CD14-positive monocyte (primary cell): ENCODE measurements at regions of chr9 and their contacts with region 1.

Region 1: DNA sequence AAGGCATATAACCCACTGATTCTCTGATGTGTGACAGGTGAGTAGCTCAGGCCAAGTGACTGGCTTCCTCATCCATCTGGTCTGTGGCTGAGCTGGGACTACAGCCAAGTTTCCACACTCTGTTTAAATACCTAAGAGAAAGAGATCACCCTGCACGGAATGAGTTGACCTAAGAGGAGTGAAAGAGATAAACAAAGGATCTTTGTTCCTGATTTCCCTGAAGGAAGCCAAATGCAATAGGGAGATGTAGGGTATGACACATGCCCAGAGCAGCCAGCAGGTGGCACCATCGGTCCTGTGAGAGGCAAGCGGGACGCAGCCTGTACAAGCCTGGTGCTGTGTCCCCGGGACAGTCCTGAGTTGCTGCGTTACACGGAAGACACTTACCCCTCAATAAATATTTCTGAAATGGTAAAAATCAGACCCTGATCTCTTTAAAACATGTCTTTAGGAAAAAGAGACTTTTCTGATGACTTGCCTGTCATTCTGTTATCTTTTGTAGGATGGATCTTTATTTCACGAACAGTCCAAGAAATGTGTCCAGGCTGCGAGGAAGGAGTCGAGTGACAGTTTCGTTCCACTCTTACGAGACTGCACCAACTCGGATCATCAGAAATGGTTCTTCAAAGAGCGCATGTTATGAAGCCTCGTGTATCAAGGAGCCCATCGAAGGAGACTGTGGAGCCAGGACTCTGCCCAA is 41.1 kb downstream of the GALNT12 start:
- DNase-seq: peak; percentile 62 to 78 (median 76)
- H3K4me3 ChIP-seq: no peak overlapping the region
- H3K4me3 Mint-ChIP-seq: no peak overlapping the region
- H3K27ac ChIP-seq: no peak overlapping the region
- H3K27ac Mint-ChIP-seq: no peak overlapping the region
- H3K4me1 ChIP-seq: no peaks in the 10 kb centered on the region
- H3K4me1 Mint-ChIP-seq: peaks cover 11% of the 10 kb centered on the region
- H3K27me3 ChIP-seq: no peaks in the 10 kb centered on the region
- H3K27me3 Mint-ChIP-seq: peaks cover 4 to 7% (median 5%) of the 10 kb centered on the region in 3 donors
- CTCF ChIP-seq: peak; percentile 96

Region 2: DNA sequence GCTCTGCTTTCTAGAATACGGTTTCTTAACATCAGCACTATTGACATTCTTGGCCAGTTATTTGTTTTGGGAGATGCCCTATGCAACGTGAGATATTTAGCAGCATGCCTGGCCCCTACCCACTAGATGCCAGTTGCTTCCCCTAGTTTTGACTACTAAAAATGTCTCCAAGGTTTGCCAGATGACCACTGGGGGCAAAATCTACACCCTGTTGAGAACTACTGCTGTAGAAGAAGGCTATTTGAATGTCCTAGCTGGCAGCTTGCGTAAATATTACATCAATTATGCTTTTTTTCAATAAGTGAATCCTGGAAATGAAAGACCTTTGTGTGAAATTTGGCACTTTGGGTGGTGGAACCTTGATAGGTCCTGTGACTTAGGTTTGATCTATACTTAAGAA is 1209.9 kb before region 1 on chr9:
- intact Hi-C with region 1: no loop called
- DNase-seq: peak in 1 of 3 donors; percentile 3
- H3K4me3 ChIP-seq: no peak overlapping the region
- H3K4me3 Mint-ChIP-seq: no peak overlapping the region
- H3K27ac ChIP-seq: peak overlapping the region in 1 of 2 donors; percentile 23
- H3K27ac Mint-ChIP-seq: peak overlapping the region in 1 of 7 donors; percentile 70
- H3K4me1 ChIP-seq: peaks cover 13 to 22% of the 10 kb centered on the region in 2 donors
- H3K4me1 Mint-ChIP-seq: peaks cover 39% of the 10 kb centered on the region
- H3K27me3 ChIP-seq: no peaks in the 10 kb centered on the region
- H3K27me3 Mint-ChIP-seq: no peaks in the 10 kb centered on the region
- CTCF ChIP-seq: no peak

Region 3: GRCh38 chr9:98974994-98975712 is 126.6 kb after region 1 on chr9:
- intact Hi-C with region 1: loop called in 1 of 2 experiments (anchors 10 kb)
- DNase-seq: peak; percentile 53 to 63 (median 60)
- H3K4me3 ChIP-seq: no peak overlapping the region
- H3K4me3 Mint-ChIP-seq: peak overlapping the region in 1 of 2 donors; percentile 80
- H3K27ac ChIP-seq: no peak overlapping the region
- H3K27ac Mint-ChIP-seq: peak overlapping the region in 2 of 7 donors; percentile 12 to 35
- H3K4me1 ChIP-seq: peaks cover 4 to 6% of the 10 kb centered on the region in 2 donors
- H3K4me1 Mint-ChIP-seq: peaks cover 9% of the 10 kb centered on the region
- H3K27me3 ChIP-seq: peaks cover 5 to 16% of the 10 kb centered on the region in 2 donors
- H3K27me3 Mint-ChIP-seq: peaks cover 17 to 43% (median 30%) of the 10 kb centered on the region in 3 donors
- CTCF ChIP-seq: peak; percentile 98

Region 4: DNA sequence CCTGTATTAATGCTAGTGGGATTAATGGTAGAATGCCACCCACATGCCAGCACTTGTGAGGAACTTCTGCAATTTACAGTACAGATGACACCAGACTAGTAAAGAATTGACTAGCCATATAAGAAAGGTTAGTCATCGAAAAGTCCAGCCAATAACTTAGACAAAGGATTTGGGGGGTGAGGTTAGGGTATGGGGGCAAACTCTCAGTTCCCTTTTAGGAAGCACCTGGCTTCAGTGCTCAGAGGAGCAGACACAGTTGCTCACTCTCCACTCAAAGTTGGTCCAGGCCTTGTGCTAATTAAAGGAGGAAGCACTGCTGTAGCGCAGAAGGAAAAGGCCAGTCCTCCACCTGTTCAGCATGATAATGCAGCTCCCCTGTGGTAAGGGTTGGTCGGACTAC is 281.5 kb after region 1 on chr9:
- intact Hi-C with region 1: loop called in 1 of 2 experiments (anchors 5 kb)
- DNase-seq: peak in 2 of 3 donors; percentile 29 to 51
- H3K4me3 ChIP-seq: no peak overlapping the region
- H3K4me3 Mint-ChIP-seq: no peak overlapping the region
- H3K27ac ChIP-seq: no peak overlapping the region
- H3K27ac Mint-ChIP-seq: peak overlapping the region in 3 of 7 donors; percentile 3 to 69 (median 24)
- H3K4me1 ChIP-seq: peaks cover 3 to 4% of the 10 kb centered on the region in 2 donors
- H3K4me1 Mint-ChIP-seq: peaks cover 35% of the 10 kb centered on the region
- H3K27me3 ChIP-seq: no peaks in the 10 kb centered on the region
- H3K27me3 Mint-ChIP-seq: no peaks in the 10 kb centered on the region
- CTCF ChIP-seq: no peak

Region 5: DNA sequence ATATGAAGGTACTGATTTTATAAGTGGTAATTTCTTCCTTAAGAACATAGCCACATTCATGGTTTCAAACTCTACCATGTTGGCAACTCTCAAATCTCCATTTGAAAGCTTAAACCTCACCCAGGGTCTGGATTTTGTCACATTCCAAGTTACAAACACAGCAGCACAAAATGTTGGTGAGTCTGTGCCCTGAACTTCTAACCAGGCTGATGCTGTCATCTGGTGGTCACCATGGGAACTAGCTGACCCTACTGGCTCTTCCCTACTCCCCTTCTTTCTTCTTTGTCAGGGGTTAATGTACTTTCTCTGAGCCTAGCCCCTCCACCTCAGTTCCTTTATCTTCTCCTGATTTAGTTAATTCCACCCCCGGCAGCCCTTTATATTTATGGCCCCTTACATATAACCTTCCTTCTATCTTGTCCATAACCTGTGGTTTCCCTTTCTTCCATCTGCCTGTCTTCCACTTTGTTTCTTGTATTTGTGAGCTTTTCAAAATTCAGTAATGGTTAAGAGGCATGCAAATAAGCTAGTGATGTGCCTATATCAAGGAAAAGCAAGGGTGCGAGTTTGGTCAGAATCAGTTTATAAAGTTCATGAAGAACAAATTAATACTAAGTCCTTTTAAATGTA is 292.2 kb after region 1 on chr9:
- intact Hi-C with region 1: loop called (anchors 5 kb)
- DNase-seq: peak; percentile 52 to 66 (median 64)
- H3K4me3 ChIP-seq: no peak overlapping the region
- H3K4me3 Mint-ChIP-seq: no peak overlapping the region
- H3K27ac ChIP-seq: no peak overlapping the region
- H3K27ac Mint-ChIP-seq: peak overlapping the region in 4 of 7 donors; percentile 0 to 44 (median 30)
- H3K4me1 ChIP-seq: peaks cover 22 to 26% of the 10 kb centered on the region in 2 donors
- H3K4me1 Mint-ChIP-seq: peaks cover 34% of the 10 kb centered on the region
- H3K27me3 ChIP-seq: no peaks in the 10 kb centered on the region
- H3K27me3 Mint-ChIP-seq: peaks cover 0 to 2% (median under 1%) of the 10 kb centered on the region in 3 donors
- CTCF ChIP-seq: peak; percentile 95

Region 6: GRCh38 chr9:99184475-99185347 is 336.1 kb after region 1 on chr9:
- intact Hi-C with region 1: no loop called
- DNase-seq: peak; percentile 65 to 82 (median 73)
- H3K4me3 ChIP-seq: peak overlapping the region in 1 of 3 experiments; percentile 41
- H3K4me3 Mint-ChIP-seq: peak overlapping the region; percentile 39 to 46
- H3K27ac ChIP-seq: no peak overlapping the region
- H3K27ac Mint-ChIP-seq: peak overlapping the region in 2 of 7 donors; percentile 63 to 64
- H3K4me1 ChIP-seq: peaks cover 31 to 36% of the 10 kb centered on the region in 2 donors
- H3K4me1 Mint-ChIP-seq: peaks cover 33% of the 10 kb centered on the region
- H3K27me3 ChIP-seq: no peaks in the 10 kb centered on the region
- H3K27me3 Mint-ChIP-seq: peaks cover 0 to 2% (median 0%) of the 10 kb centered on the region in 3 donors
- CTCF ChIP-seq: peak; percentile 94